Natural killer cell (primary cell): ENCODE measurements at regions of chr19 and their contacts with region 1.

Region 1: DNA sequence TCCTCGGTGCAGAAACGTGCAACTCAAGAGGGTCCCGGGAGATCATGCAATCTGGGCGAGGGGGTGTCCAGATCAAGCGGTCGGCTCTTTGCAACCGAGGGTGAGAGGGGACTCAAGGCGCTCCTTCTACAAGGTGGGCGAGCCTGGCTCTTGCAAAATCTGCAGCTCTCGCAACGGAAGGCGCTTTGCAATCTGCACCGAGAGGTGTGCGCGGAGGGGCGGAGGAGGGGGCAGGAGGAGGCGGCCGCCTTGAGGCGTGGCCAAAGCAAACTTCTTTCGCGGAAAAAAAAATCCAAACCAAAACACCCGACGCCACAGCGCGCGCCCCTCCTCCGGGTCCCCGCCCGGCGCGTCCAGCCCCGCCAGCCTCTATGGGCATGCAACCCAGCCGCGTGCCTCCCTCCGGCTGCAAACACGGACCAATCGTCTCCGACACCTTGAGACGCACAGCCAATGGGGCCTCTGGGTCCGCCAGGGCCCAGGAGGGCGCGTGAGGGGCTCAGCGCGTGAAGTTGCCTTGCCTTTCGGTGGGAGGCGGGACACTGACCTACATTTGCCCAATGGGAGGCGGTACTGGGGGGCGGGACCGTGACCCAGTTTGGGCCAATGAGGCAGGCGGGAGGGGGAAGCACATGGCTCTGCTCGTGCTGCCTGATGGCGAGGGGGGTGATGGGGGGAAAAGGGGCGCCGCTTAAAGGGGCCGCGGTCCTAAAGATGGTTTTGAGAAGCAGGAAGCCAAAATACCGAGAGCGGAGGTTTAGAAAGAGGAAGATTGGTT is at the start of gene DBP:
- DNase-seq: peak; percentile 99 to 100
- ATAC-seq: peak; percentile 70 to 87 (median 76)
- H3K4me3 ChIP-seq: peak within 1 kb of the TSS; percentile 72
- H3K4me3 Mint-ChIP-seq: peak within 1 kb of the TSS; percentile 95
- H3K27ac ChIP-seq: peak within 1 kb of the TSS; percentile 97
- H3K27ac Mint-ChIP-seq: peak within 1 kb of the TSS; percentile 99
- H3K4me1 ChIP-seq: peaks cover 54% of the 10 kb centered on the region
- H3K4me1 Mint-ChIP-seq: peaks cover 39 to 51% of the 10 kb centered on the region in 2 donors
- H3K27me3 ChIP-seq: no peaks in the 10 kb centered on the region
- H3K27me3 Mint-ChIP-seq: no peaks in the 10 kb centered on the region
- CTCF ChIP-seq: no peak
- total RNA-seq, gene DBP: 16.4 to 31.2 (median 24.3) TPM

Region 2: GRCh38 chr19:48218997-48219396 is 418.4 kb before region 1 on chr19:
- intact Hi-C with region 1: no loop called
- DNase-seq: no peak
- ATAC-seq: no peak
- H3K4me3 ChIP-seq: no peak overlapping the region
- H3K4me3 Mint-ChIP-seq: no peak overlapping the region
- H3K27ac ChIP-seq: no peak overlapping the region
- H3K27ac Mint-ChIP-seq: peak overlapping the region; percentile 23 to 29
- H3K4me1 ChIP-seq: no peaks in the 10 kb centered on the region
- H3K4me1 Mint-ChIP-seq: no peaks in the 10 kb centered on the region
- H3K27me3 ChIP-seq: no peaks in the 10 kb centered on the region
- H3K27me3 Mint-ChIP-seq: no peaks in the 10 kb centered on the region
- CTCF ChIP-seq: no peak

Region 3: GRCh38 chr19:48492925-48493717 is 144.2 kb before region 1 on chr19:
- intact Hi-C with region 1: loop called (anchors 5 kb)
- DNase-seq: peak; percentile 88 to 89
- ATAC-seq: peak; percentile 77 to 93 (median 81)
- H3K4me3 ChIP-seq: peak overlapping the region; percentile 27
- H3K4me3 Mint-ChIP-seq: peak overlapping the region; percentile 67
- H3K27ac ChIP-seq: no peak overlapping the region
- H3K27ac Mint-ChIP-seq: peak overlapping the region; percentile 24 to 88
- H3K4me1 ChIP-seq: peaks cover 47% of the 10 kb centered on the region
- H3K4me1 Mint-ChIP-seq: peaks cover 30 to 48% of the 10 kb centered on the region in 2 donors
- H3K27me3 ChIP-seq: peaks cover 32% of the 10 kb centered on the region
- H3K27me3 Mint-ChIP-seq: peaks cover 8 to 19% of the 10 kb centered on the region in 2 donors
- CTCF ChIP-seq: no peak

Region 4: DNA sequence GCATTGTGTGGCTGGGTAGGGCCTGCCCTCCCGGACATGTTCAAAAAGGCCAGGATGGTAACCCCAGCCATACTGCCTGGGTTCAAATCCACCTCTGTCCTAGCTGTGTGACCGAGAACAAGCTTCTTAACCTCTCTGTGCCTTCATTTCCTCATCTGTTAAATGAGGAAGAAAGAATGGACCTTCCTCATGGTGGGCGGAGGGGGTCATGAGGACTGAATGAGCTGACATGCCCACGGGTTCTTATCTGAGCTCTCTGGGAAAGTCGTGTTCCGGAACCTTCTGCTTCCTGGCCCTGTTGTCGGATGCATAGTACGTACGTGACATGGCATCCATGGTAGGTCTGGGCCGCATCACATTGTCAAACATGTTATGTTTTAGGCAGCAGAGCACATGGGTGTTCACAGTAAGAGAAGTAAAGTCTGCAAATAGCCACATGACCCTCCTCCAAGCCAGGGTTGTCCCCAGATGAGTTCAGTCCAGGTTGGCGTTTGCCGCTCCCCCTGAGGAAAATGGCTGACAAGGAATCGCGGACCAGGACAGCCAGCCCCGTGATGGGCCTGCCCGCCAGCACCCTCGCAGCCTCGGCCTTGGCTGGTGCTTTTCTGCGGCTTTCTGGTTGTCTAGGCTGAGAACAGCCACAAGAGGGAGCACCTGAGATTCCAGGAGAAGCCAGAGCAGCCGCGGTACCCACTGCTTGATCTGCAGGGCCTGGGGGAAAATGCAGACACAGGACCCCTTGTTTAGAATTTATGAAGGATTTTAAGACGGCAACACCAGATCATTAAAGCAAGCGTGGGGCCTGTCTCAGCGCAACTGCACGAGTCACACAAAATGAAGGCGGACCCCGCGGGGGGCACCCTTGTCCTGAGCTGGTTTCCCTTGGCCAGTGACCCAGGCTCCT is 37.8 kb after region 1 on chr19:
- intact Hi-C with region 1: loop called (anchors 5 kb)
- DNase-seq: peak; percentile 59 to 91
- ATAC-seq: peak; percentile 74 to 98 (median 98)
- H3K4me3 ChIP-seq: no peak overlapping the region
- H3K4me3 Mint-ChIP-seq: no peak overlapping the region
- H3K27ac ChIP-seq: no peak overlapping the region
- H3K27ac Mint-ChIP-seq: peak overlapping the region in 1 of 2 donors; percentile 52
- H3K4me1 ChIP-seq: peaks cover 8% of the 10 kb centered on the region
- H3K4me1 Mint-ChIP-seq: peaks cover 7 to 8% of the 10 kb centered on the region in 2 donors
- H3K27me3 ChIP-seq: no peaks in the 10 kb centered on the region
- H3K27me3 Mint-ChIP-seq: peaks cover 0 to 3% of the 10 kb centered on the region in 2 donors
- CTCF ChIP-seq: peak; percentile 74

Region 5: DNA sequence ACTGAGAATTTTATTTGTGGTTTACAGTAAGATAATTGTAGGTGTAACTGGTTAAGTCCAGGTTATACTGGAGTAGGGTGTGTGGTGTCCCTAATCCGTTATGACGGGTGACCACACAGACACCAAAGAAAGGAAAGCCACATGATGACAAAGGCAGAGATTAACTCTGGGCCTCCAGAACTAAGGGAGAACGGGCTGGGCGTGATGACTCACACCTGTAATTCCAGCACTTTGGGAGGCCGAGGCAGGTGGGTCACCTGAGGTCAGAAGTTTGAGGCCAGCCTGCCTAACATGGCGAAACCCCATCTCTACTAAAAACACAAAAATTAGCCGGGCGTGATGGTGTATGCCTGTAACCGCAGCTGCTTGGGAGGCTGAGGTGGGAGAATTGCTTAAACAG is 48.2 kb after region 1 on chr19:
- intact Hi-C with region 1: no loop called
- DNase-seq: no peak
- ATAC-seq: no peak
- H3K4me3 ChIP-seq: no peak overlapping the region
- H3K4me3 Mint-ChIP-seq: no peak overlapping the region
- H3K27ac ChIP-seq: no peak overlapping the region
- H3K27ac Mint-ChIP-seq: no peak overlapping the region
- H3K4me1 ChIP-seq: peaks cover 6% of the 10 kb centered on the region
- H3K4me1 Mint-ChIP-seq: no peaks in the 10 kb centered on the region
- H3K27me3 ChIP-seq: no peaks in the 10 kb centered on the region
- H3K27me3 Mint-ChIP-seq: no peaks in the 10 kb centered on the region
- CTCF ChIP-seq: no peak

Region 6: DNA sequence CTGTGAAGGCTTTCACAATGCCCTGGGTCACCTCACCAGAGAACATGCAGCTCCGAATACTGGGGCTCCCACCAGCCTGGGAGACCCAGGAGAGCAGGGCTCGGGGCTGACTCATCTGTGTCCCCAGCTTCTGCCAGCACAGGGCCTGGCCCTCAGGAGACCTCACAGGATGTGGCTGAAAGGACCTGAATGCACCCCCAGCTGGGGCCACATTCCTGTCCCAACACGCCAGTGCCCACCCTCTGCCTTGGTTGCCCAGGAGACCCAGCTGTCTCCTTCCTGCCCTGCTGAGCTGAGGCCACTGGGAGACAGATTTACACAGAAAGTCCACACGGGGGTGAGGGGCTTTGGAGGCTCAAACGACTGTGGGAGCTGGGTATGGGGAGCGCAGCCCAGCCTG is 161.6 kb after region 1 on chr19:
- intact Hi-C with region 1: no loop called
- DNase-seq: no peak
- ATAC-seq: no peak
- H3K4me3 ChIP-seq: no peak overlapping the region
- H3K4me3 Mint-ChIP-seq: no peak overlapping the region
- H3K27ac ChIP-seq: no peak overlapping the region
- H3K27ac Mint-ChIP-seq: no peak overlapping the region
- H3K4me1 ChIP-seq: peaks cover 12% of the 10 kb centered on the region
- H3K4me1 Mint-ChIP-seq: peaks cover 13 to 14% of the 10 kb centered on the region in 2 donors
- H3K27me3 ChIP-seq: no peaks in the 10 kb centered on the region
- H3K27me3 Mint-ChIP-seq: no peaks in the 10 kb centered on the region
- CTCF ChIP-seq: no peak

Region 7: GRCh38 chr19:48993175-48994034 is 356.0 kb after region 1 on chr19 and contains the starts of genes GYS1 and RUVBL2:
- intact Hi-C with region 1: loop called (anchors 10 kb)
- DNase-seq: peak; percentile 98 to 100
- ATAC-seq: peak; percentile 90 to 98 (median 92)
- H3K4me3 ChIP-seq: peak within 1 kb of the TSS; percentile 79
- H3K4me3 Mint-ChIP-seq: peak within 1 kb of the TSS; percentile 97
- H3K27ac ChIP-seq: peak within 1 kb of the TSS; percentile 86
- H3K27ac Mint-ChIP-seq: peak within 1 kb of the TSS; percentile 94 to 97
- H3K4me1 ChIP-seq: peaks cover 31% of the 10 kb centered on the region
- H3K4me1 Mint-ChIP-seq: peaks cover 28 to 51% of the 10 kb centered on the region in 2 donors
- H3K27me3 ChIP-seq: no peaks in the 10 kb centered on the region
- H3K27me3 Mint-ChIP-seq: no peaks in the 10 kb centered on the region
- CTCF ChIP-seq: peak; percentile 97
- total RNA-seq, gene GYS1: 31.6 to 34.5 (median 34.4) TPM
- total RNA-seq, gene RUVBL2: 23.6 to 28.3 (median 26.5) TPM